Cardiac septum (tissue), 1 donor: ENCODE measurements at regions of chr9 and their contacts with region 1.

Region 1: GRCh38 chr9:31467086-31467485 is 917.4 kb upstream of the ACO1 start:
- DNase-seq: no peak

Region 2: GRCh38 chr9:30258079-30258478 is 1209.0 kb before region 1 on chr9:
- intact Hi-C with region 1: no loop called
- DNase-seq: no peak

Region 3: GRCh38 chr9:31394015-31394473 is 73.0 kb before region 1 on chr9:
- intact Hi-C with region 1: no loop called
- DNase-seq: no peak

Region 4: DNA sequence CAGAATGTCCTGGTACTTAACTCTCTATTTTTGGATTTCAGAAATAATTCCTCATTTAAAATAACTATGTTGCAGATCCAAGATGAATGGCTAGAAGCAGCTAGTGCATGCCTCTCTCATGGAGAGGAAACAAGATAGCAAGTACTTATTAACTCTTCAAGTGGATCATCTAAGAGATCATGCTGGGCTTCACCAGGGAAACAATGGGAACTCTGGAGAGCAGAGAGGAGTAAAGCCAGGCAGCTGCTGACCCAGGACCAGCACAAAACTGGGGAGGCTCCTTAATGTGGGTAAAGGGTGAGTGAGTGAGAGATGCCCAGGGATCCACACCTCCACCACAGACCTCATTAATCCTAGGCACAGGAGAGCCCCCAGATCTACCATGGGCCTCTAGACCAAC is 19.5 kb after region 1 on chr9:
- intact Hi-C with region 1: loop called (anchors 2 kb)
- DNase-seq: no peak